K562 (cell line): ENCODE measurements at regions of chr2 and their contacts with region 1.

Region 1: GRCh38 chr2:241666627-241667400 is 19.8 kb downstream of the DTYMK start:
- DNase-seq: no peak
- ATAC-seq: no peak
- H3K4me3 ChIP-seq: no peak overlapping the region
- H3K27ac ChIP-seq: no peak overlapping the region
- H3K4me1 ChIP-seq: peaks cover 0 to 5% of the 10 kb centered on the region in 2 experiments; a peak in 3 of 5 replicates
- H3K27me3 ChIP-seq: no peaks in the 10 kb centered on the region
- CTCF ChIP-seq: no peak
- EP300 ChIP-seq: no peak
- POLR2A ChIP-seq: no peak
- RAD21 ChIP-seq: no peak

Region 2: GRCh38 chr2:241734467-241735208 is 67.8 kb after region 1 on chr2 and contains the start of gene D2HGDH:
- CTCF ChIA-PET with region 1: no interaction called
- POLR2A ChIA-PET with region 1: no interaction called
- in situ Hi-C with region 1: no loop called
- intact Hi-C with region 1: loop called (anchors 1 kb)
- DNase-seq: peak; percentile 83 to 92 (median 90)
- ATAC-seq: peak; percentile 93
- H3K4me3 ChIP-seq: peak within 1 kb of the TSS; percentile 74
- H3K27ac ChIP-seq: peak within 1 kb of the TSS; percentile 88
- H3K4me1 ChIP-seq: peaks cover 4 to 48% of the 10 kb centered on the region in 2 experiments; a peak in 3 of 5 replicates
- H3K27me3 ChIP-seq: no peaks in the 10 kb centered on the region
- CTCF ChIP-seq: no peak
- EP300 ChIP-seq: no peak
- POLR2A ChIP-seq: peak; percentile 60
- RAD21 ChIP-seq: no peak
- polyA plus RNA-seq, gene D2HGDH: 0.39 to 0.52 TPM

Region 3: DNA sequence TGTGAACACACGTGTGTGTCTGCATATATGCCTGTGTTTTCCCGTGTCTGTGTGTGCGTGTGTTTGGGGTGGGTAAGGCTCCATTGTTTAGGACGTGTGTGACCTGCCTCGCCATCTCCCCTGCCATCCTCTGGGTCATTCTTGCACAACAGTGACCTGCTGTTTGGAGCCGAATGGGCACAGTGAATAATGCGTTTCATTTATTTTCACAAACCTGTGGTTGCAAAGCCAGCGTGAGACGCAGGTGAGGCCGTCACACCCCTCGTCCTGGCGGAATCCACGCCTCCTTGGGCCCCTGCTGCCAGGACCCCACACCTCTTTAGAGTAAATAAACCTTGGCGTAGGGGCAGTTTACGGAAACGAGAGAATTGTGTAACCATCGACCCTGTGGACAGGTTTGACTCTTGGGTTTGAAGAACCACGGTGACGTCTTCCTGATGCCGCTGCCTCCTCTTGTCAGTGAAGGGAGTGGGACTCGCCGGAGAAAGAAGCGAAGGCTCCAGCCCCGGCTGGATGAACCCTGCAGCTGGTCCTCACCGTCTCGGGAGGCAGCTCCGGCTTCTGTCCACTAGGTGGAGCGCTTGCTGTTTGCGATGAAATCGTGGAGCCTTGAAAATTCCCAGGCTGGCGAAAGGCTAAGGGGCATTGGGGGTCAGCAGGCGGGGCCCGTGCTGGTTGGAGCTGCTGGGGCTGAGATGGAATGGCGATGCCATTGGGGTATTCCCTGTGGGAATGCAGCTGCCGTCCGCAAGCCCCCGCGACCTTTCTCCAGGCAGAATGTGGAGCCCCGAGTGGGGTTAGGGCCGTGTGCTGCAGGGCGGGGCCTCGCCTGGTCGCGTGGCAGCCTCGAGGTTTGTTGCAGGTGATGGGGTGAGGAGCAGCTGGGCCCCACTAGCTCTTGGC is 283.9 kb after region 1 on chr2:
- CTCF ChIA-PET with region 1: no interaction called
- POLR2A ChIA-PET with region 1: no interaction called
- in situ Hi-C with region 1: no loop called
- intact Hi-C with region 1: no loop called
- DNase-seq: peak; percentile 71 to 74 (median 74)
- ATAC-seq: peak; percentile 96
- H3K4me3 ChIP-seq: no peak overlapping the region
- H3K27ac ChIP-seq: no peak overlapping the region
- H3K4me1 ChIP-seq: peaks cover 0 to 17% of the 10 kb centered on the region in 2 experiments; a peak in 2 of 5 replicates
- H3K27me3 ChIP-seq: peaks cover 0 to 7% of the 10 kb centered on the region in 2 experiments; a peak in 1 of 5 replicates
- CTCF ChIP-seq: peak; percentile 79 to 84 (median 80)
- EP300 ChIP-seq: no peak
- POLR2A ChIP-seq: no peak
- RAD21 ChIP-seq: peak; percentile 79 to 87